Caki2 (cell line): ENCODE measurements at regions of chr14 and their contacts with region 1.

Region 1: GRCh38 chr14:68268197-68268596 is 448.6 kb downstream of the RAD51B start:
- DNase-seq: no peak

Region 2: GRCh38 chr14:67943947-67944346 is 324.2 kb before region 1 on chr14:
- in situ Hi-C with region 1: loop called (anchors 25 kb)
- DNase-seq: peak; percentile 84